Psoas muscle (tissue), 8 donors: ENCODE measurements at regions of chr6 and their contacts with region 1.

Region 1: GRCh38 chr6:33313709-33314514 is at the start of gene TAPBP:
- DNase-seq: peak; percentile 55 to 76
- ATAC-seq: peak; percentile 2 to 31 (median 18)
- H3K4me3 ChIP-seq: peak within 1 kb of the TSS; percentile 98
- H3K27ac ChIP-seq: peak within 1 kb of the TSS; percentile 91
- H3K4me1 ChIP-seq: peaks cover 40% of the 10 kb centered on the region
- H3K27me3 ChIP-seq: no peaks in the 10 kb centered on the region
- CTCF ChIP-seq: no peak
- total RNA-seq, gene TAPBP: 24.4 to 37.4 (median 27.1) TPM

Region 2: GRCh38 chr6:33276864-33277662 is 36.8 kb before region 1 on chr6 and contains the start of gene B3GALT4:
- intact Hi-C with region 1: loop called in 1 of 2 experiments (anchors 5 kb)
- DNase-seq: peak; percentile 80 to 85
- ATAC-seq: peak; percentile 49 to 78 (median 67)
- H3K4me3 ChIP-seq: peak within 1 kb of the TSS; percentile 68
- H3K27ac ChIP-seq: peak within 1 kb of the TSS; percentile 78
- H3K4me1 ChIP-seq: peaks cover 39% of the 10 kb centered on the region
- H3K27me3 ChIP-seq: no peaks in the 10 kb centered on the region
- CTCF ChIP-seq: peak; percentile 49
- total RNA-seq, gene B3GALT4: 1.3 to 3.6 (median 1.7) TPM

Region 3: GRCh38 chr6:33301877-33302276 is 12.0 kb before region 1 on chr6:
- intact Hi-C with region 1: loop called in 1 of 2 experiments (anchors 2 kb)
- DNase-seq: no peak
- ATAC-seq: no peak
- H3K4me3 ChIP-seq: no peak overlapping the region
- H3K27ac ChIP-seq: no peak overlapping the region
- H3K4me1 ChIP-seq: peaks cover 26% of the 10 kb centered on the region
- H3K27me3 ChIP-seq: no peaks in the 10 kb centered on the region
- CTCF ChIP-seq: no peak

Region 4: DNA sequence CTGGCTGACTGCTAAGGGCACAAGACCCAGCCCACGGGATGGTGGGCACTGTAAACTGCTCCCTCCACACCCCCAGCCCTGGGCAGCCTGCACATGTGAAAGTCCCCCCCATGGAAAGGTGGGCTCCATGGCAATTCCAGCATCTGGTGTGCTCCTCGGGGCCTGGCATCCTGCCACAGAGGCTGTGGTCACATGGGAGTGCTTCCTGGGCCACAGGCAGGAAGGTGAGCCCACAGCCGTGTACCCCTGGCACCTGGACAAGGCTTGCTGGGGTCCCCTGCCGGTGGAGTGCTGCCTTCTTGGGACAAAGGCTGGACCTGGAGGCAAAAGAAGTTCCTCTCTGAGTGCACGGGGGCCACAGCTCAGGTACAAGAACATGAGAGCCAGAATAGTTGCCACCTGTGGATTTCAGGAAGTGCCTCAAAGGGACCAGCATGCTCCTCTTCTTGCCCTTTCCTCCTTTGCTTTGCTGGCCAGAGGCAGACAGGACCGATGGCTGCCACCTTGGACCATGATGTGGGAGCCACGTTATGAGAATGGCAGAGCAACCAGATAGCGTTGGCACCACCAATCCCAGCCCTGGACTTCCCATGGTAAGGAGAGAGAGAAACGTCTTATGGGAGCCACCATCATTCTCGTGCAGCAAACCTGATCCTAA is 610.1 kb after region 1 on chr6:
- intact Hi-C with region 1: no loop called
- DNase-seq: no peak
- ATAC-seq: no peak
- H3K4me3 ChIP-seq: no peak overlapping the region
- H3K27ac ChIP-seq: no peak overlapping the region
- H3K4me1 ChIP-seq: no peaks in the 10 kb centered on the region
- H3K27me3 ChIP-seq: peaks cover 0 to 4% (median 0%) of the 10 kb centered on the region in 3 donors
- CTCF ChIP-seq: no peak